ENCODE measurements at regions of chr6 and their contacts with region 1.

Region 1: GRCh38 chr6:30730601-30731435 is 10.7 kb downstream of the TUBB start:
- DNase-seq: no peak
- ATAC-seq: peak; percentile 87
- H3K4me3 ChIP-seq: no peak overlapping the region
- H3K27ac ChIP-seq: peak overlapping the region; percentile 32; the same call in 1 of the 2 replicates
- H3K4me1 ChIP-seq: peaks cover 13% of the 10 kb centered on the region
- H3K27me3 ChIP-seq: no peaks in the 10 kb centered on the region
- CTCF ChIP-seq: peak; percentile 83 to 96 (median 90)
- EP300 ChIP-seq: no peak
- POLR2A ChIP-seq: peak; percentile 42; the same call in 1 of the 2 replicates
- RAD21 ChIP-seq: peak; percentile 83

Region 2: GRCh38 chr6:30483677-30484279 is 247.0 kb before region 1 on chr6:
- CTCF ChIA-PET with region 1: interaction called, 13 read pairs
- POLR2A ChIA-PET with region 1: no interaction called
- RAD21 ChIA-PET with region 1: interaction called, 4 read pairs
- SMC1A ChIA-PET with region 1: interaction called, 3 read pairs
- in situ Hi-C with region 1: loop called (anchors 5 kb)
- intact Hi-C with region 1: loop called (anchors 2 kb)
- DNase-seq: peak; percentile 37
- ATAC-seq: peak; percentile 48
- H3K4me3 ChIP-seq: no peak overlapping the region
- H3K27ac ChIP-seq: no peak overlapping the region
- H3K4me1 ChIP-seq: peaks cover 12% of the 10 kb centered on the region; the same call in 1 of the 2 replicates
- H3K27me3 ChIP-seq: peaks cover 2 to 8% of the 10 kb centered on the region in 2 experiments; a peak in 3 of 4 replicates
- CTCF ChIP-seq: peak; percentile 47 to 73 (median 56); a peak in 5 of 6 replicates
- EP300 ChIP-seq: no peak
- POLR2A ChIP-seq: no peak
- RAD21 ChIP-seq: peak; percentile 90

Region 3: GRCh38 chr6:30616811-30617564 is 113.8 kb before region 1 on chr6 and contains the start of gene PPP1R10:
- CTCF ChIA-PET with region 1: interaction called, 13 read pairs
- POLR2A ChIA-PET with region 1: interaction called, 7 read pairs
- RAD21 ChIA-PET with region 1: interaction called, 8 read pairs
- SMC1A ChIA-PET with region 1: interaction called, 19 read pairs
- in situ Hi-C with region 1: no loop called
- intact Hi-C with region 1: no loop called
- DNase-seq: peak; percentile 100
- ATAC-seq: peak; percentile 81
- H3K4me3 ChIP-seq: peak within 1 kb of the TSS; percentile 80
- H3K27ac ChIP-seq: peak within 1 kb of the TSS; percentile 99
- H3K4me1 ChIP-seq: peaks cover 3% of the 10 kb centered on the region
- H3K27me3 ChIP-seq: no peaks in the 10 kb centered on the region
- CTCF ChIP-seq: no peak
- EP300 ChIP-seq: no peak; a peak in 1 of 4 replicates
- POLR2A ChIP-seq: peak; percentile 97
- RAD21 ChIP-seq: no peak
- polyA plus RNA-seq, gene PPP1R10: 11.3 to 22.6 TPM

Region 4: GRCh38 chr6:30686908-30687658 is 43.7 kb before region 1 on chr6:
- CTCF ChIA-PET with region 1: interaction called, 487 read pairs
- POLR2A ChIA-PET with region 1: interaction called, 36 read pairs
- RAD21 ChIA-PET with region 1: interaction called, 232 read pairs
- SMC1A ChIA-PET with region 1: interaction called, 265 read pairs
- in situ Hi-C with region 1: no loop called
- intact Hi-C with region 1: no loop called
- DNase-seq: peak; percentile 94
- ATAC-seq: peak; percentile 64
- H3K4me3 ChIP-seq: peak overlapping the region; percentile 100
- H3K27ac ChIP-seq: peak overlapping the region; percentile 96
- H3K4me1 ChIP-seq: peaks cover 15% of the 10 kb centered on the region
- H3K27me3 ChIP-seq: no peaks in the 10 kb centered on the region
- CTCF ChIP-seq: no peak
- EP300 ChIP-seq: peak; percentile 60 to 91
- POLR2A ChIP-seq: peak; percentile 62
- RAD21 ChIP-seq: no peak

Region 5: DNA sequence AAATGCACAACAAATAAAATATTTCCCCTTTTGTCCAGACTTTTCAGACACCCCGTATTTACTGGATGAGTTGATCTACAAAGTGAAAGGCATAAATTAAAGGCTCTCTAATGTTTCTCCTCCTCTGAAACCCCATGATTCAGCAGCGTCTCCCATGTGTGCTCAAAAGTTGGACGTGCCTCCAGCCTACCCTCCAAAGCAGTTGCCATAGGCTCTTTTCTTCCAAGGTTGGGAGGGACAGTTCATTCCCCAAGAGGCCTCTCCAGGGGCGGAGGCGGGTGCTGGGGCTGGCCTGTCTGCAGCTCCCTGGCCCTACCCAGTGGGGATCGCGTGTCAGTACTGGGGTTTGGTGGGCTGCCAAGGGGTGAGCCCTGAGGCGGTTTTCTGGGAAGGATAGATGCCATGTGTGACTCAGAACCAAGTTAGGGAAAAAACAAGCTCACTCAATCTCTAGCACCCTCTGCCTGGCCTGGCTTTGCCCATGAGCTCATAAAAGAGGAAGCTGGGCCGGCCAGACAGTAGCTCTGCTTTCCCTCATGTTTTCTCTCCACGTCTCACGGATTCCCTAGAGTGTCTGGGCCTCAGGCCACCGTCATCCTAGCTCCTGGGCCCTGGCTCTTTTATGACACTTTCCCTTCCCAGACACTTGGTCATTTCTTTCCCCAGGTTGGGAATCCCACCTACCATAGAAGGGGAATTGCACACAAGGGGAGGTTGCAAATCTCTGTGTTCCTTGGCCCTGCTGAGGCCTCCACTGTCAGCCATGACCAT is 21.5 kb after region 1 on chr6:
- CTCF ChIA-PET with region 1: interaction called, 9 read pairs
- POLR2A ChIA-PET with region 1: interaction called, 41 read pairs
- RAD21 ChIA-PET with region 1: interaction called, 60 read pairs
- SMC1A ChIA-PET with region 1: interaction called, 55 read pairs
- in situ Hi-C with region 1: no loop called
- intact Hi-C with region 1: no loop called
- DNase-seq: no peak
- ATAC-seq: peak; percentile 56
- H3K4me3 ChIP-seq: no peak overlapping the region
- H3K27ac ChIP-seq: no peak overlapping the region
- H3K4me1 ChIP-seq: peaks cover 3% of the 10 kb centered on the region; the same call in 1 of the 2 replicates
- H3K27me3 ChIP-seq: no peaks in the 10 kb centered on the region
- CTCF ChIP-seq: no peak
- EP300 ChIP-seq: no peak
- POLR2A ChIP-seq: no peak
- RAD21 ChIP-seq: no peak

Region 6: DNA sequence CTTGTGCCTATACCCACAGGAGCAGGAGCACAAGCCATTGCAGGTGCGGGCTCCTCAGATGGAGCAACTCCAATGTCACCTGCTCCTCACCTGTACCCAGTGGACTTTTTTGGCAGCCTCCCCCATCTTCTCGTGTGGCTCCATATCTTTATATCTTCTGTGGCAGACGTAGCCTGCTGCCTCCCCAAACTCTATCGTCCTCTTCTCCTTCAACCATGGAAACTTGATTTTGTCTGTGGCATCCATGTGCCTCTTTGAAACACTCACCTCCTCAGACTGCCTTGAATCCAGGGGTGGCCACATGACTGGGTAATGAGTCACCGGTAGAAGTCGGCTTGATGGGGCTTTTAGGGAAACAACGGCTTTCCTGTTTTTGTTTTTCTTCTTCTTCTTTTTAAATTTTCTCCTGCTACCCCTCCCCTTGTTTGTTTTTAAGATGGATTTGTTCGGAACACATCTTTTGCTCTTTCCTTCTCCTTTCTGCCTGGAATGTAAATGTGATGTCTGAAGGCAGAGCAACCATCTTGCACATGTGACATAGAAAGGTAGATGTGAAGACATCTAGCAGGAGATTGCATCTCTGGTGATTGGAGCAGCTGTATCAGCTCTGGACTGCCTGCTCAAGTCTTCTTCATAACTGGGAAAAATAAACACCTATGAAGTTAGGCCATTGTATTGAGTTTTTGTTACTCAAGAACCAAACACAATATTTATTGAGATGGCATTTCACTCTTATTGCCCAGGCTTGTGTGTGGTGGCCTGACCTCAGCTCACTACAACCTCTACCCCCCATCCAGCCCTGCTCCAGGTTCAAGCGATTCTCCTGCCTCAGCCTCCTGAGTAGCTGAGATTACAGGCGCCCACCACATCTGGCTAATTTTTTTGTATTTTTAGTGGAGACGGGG is 83.6 kb after region 1 on chr6:
- CTCF ChIA-PET with region 1: interaction called, 40 read pairs
- POLR2A ChIA-PET with region 1: interaction called, 3 read pairs
- RAD21 ChIA-PET with region 1: interaction called, 45 read pairs
- SMC1A ChIA-PET with region 1: interaction called, 47 read pairs
- in situ Hi-C with region 1: no loop called
- intact Hi-C with region 1: no loop called
- DNase-seq: no peak
- ATAC-seq: 0 out of 3 replicates have a peak, but pooled peaks have one; percentile 5
- H3K4me3 ChIP-seq: no peak overlapping the region
- H3K27ac ChIP-seq: peak overlapping the region; percentile 52
- H3K4me1 ChIP-seq: peaks cover 50% of the 10 kb centered on the region
- H3K27me3 ChIP-seq: no peaks in the 10 kb centered on the region
- CTCF ChIP-seq: no peak
- EP300 ChIP-seq: no peak
- POLR2A ChIP-seq: no peak
- RAD21 ChIP-seq: no peak